ENCODE measurements at regions of chr13 and their contacts with region 1.

Region 1: DNA sequence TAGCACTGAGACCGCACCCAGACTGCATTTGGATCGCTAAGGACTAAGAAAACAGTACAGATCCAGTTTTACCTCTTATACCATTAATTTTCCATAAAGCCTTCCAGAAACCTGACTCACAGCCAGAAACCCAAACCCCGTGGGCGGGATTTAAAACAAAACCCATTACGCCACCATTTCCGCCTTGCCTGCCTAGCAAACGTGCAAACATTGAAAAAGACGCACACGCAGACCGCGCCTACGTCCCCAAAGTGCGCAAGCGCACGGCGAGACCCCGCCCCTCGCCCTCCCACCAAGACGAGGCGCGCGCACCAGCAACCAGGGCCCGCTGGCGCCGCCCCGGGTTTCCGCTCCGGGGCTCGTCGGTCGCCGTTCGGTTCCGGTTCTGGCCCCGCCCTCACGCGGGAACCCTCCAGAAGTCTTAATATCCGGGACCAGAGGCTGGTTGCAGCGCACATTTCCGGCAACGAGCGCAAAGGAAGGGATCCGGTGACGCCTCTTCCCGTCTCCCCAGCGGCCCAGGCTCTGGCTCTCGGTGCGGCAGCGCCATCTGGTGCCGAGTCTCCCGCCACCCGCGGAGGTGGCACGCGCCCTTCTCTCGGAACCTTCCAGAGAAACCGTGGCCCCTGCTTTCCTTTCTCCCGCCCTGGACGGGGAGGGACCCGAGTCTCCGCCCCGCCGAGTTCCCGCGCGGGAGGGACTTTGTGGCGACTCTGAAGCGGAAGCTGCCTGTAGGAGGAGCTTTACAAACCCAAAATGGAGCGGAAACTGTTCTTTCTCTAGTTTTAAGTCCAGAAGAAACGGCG is 256.9 kb upstream of the STARD13 start:
- DNase-seq: peak; percentile 96 to 100
- H3K4me3 ChIP-seq: peak overlapping the region; percentile 66 to 69
- H3K27ac ChIP-seq: peak overlapping the region; percentile 93 to 98
- H3K4me1 ChIP-seq: peaks cover 7 to 30% of the 10 kb centered on the region in 2 donors
- H3K27me3 ChIP-seq: no peaks in the 10 kb centered on the region
- CTCF ChIP-seq: peak; percentile 87 to 93 (median 91)

Region 2: DNA sequence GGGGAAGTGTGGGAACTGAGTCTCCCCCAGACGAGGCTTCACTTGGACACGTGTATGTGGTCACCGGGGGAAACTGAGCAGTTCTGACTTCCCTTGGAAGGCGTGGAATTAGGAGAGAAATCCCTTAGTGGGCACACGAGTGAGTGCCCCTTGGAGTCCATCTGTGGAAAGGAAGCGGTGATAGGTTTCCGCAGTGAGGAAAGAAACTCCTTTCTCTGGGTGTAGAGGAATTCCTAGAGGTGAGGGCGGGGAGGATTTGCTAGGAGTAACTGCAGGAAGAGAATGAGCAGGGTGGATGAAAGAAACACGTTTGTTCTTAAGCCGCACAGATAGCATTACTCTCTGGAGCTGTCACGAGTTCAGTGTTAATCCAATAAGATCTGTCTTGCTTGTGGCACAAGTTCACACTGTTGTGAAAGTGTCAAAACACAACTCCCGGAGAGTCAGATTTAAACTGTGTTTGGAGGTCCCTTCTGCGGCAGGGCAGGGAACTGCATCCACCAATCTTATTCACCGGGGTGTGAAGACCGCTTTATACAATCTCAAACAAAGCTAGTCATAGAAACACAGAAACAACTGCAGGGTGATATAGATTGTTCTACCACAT is 525.1 kb before region 1 on chr13:
- intact Hi-C with region 1: loop called (anchors 5 kb)
- DNase-seq: peak in 1 of 2 donors; percentile 75
- H3K4me3 ChIP-seq: peak overlapping the region; percentile 55 to 75
- H3K27ac ChIP-seq: peak overlapping the region; percentile 43 to 57
- H3K4me1 ChIP-seq: peaks cover 0 to 2% of the 10 kb centered on the region in 2 donors
- H3K27me3 ChIP-seq: no peaks in the 10 kb centered on the region
- CTCF ChIP-seq: peak; percentile 32 to 47 (median 40)

Region 3: DNA sequence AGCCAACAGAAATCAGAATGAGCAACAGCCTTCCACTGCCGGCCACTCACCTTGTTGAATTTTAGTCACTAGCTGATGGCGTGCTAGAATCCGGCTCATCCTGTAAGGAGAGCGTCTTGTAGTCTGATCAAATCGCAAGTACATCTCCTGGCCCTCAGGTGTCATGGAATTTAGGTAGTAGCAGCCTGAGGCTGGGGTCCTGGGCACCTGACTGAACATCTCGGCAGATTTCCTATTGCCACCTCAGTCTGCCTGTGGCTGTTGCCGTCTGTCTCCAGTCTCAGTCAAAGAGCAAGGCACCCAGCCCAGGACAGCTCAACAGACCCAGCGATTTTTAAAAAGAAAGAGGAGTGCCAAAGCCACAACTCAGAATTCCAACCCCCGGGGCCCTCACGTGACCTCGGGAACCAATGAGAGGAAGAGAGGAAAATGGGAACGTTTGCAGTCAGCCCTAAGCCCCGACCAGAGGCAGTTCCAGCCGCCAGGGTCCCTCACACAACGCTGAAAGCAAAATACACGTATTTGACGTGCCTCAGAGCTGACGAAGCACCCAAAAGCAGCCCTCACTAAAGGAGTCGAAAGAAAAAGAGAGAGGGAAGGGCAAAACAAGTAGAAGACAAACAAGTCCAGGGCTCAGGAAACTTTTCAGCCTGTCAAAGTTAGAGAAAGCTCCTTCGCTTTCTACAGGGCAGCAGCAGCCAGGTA is 256.9 kb before region 1 on chr13 and contains the start of gene STARD13:
- intact Hi-C with region 1: loop called (anchors 1 kb)
- DNase-seq: peak; percentile 92 to 98
- H3K4me3 ChIP-seq: peak within 1 kb of the TSS; percentile 73 to 94
- H3K27ac ChIP-seq: peak within 1 kb of the TSS; percentile 88 to 97
- H3K4me1 ChIP-seq: peaks cover 10 to 26% of the 10 kb centered on the region in 2 donors
- H3K27me3 ChIP-seq: no peaks in the 10 kb centered on the region
- CTCF ChIP-seq: peak; percentile 34 to 52 (median 42)
- total RNA-seq, gene STARD13: 34.6 TPM

Region 4: GRCh38 chr13:33494596-33495204 is 47.8 kb before region 1 on chr13:
- intact Hi-C with region 1: loop called (anchors 2 kb)
- DNase-seq: no peak
- H3K4me3 ChIP-seq: no peak overlapping the region
- H3K27ac ChIP-seq: peak overlapping the region; percentile 56 to 82
- H3K4me1 ChIP-seq: peaks cover 0 to 35% of the 10 kb centered on the region in 2 donors
- H3K27me3 ChIP-seq: no peaks in the 10 kb centered on the region
- CTCF ChIP-seq: no peak

Region 5: GRCh38 chr13:33524086-33524485 is 18.4 kb before region 1 on chr13:
- intact Hi-C with region 1: no loop called
- DNase-seq: no peak
- H3K4me3 ChIP-seq: no peak overlapping the region
- H3K27ac ChIP-seq: peak overlapping the region; percentile 33 to 68
- H3K4me1 ChIP-seq: peaks cover 5 to 24% of the 10 kb centered on the region in 2 donors
- H3K27me3 ChIP-seq: no peaks in the 10 kb centered on the region
- CTCF ChIP-seq: no peak

Region 6: DNA sequence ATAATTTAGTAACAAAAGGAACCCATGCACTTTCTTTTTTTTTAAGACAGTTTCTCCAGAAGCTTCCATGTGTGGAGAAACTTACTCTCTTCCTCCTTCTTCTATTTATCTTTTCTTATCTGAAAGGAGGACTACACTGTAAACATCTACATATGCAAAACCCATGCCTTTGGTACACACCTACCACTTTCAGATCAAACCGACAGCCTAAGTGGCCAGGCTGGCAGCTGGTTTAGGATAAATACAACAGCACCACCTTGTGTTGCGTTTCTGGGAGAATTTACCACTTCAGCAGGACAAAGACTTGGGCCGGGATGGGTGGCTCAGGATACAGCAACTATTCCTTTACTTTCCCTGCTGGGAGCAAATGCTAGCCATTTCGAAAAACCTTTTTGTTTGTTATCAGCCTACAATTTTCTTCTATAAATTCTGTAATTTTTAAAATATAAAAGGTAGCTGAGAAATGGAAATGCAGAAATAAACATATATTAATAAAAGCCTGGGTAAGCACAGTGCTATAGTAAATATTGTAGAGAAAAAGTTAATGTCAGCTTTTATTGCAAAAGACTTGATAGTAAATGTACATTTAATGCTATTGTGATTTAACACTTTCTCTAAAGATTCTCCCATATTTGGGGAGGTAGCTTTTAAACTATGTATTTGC is 181.4 kb after region 1 on chr13:
- intact Hi-C with region 1: loop called (anchors 2 kb)
- DNase-seq: peak; percentile 22 to 89
- H3K4me3 ChIP-seq: no peak overlapping the region
- H3K27ac ChIP-seq: peak overlapping the region; percentile 61 to 64
- H3K4me1 ChIP-seq: peaks cover 10 to 11% of the 10 kb centered on the region in 2 donors
- H3K27me3 ChIP-seq: no peaks in the 10 kb centered on the region
- CTCF ChIP-seq: peak; percentile 60 to 78 (median 67)

Region 7: GRCh38 chr13:33787051-33787591 is 244.6 kb after region 1 on chr13:
- intact Hi-C with region 1: no loop called
- DNase-seq: no peak
- H3K4me3 ChIP-seq: peak overlapping the region; percentile 45 to 46
- H3K27ac ChIP-seq: no peak overlapping the region
- H3K4me1 ChIP-seq: no peaks in the 10 kb centered on the region
- H3K27me3 ChIP-seq: no peaks in the 10 kb centered on the region
- CTCF ChIP-seq: no peak

Measured in ascending aorta (tissue), 2 donors.